ENCODE measurements at regions of chr11 and their contacts with region 1.

Region 1: DNA sequence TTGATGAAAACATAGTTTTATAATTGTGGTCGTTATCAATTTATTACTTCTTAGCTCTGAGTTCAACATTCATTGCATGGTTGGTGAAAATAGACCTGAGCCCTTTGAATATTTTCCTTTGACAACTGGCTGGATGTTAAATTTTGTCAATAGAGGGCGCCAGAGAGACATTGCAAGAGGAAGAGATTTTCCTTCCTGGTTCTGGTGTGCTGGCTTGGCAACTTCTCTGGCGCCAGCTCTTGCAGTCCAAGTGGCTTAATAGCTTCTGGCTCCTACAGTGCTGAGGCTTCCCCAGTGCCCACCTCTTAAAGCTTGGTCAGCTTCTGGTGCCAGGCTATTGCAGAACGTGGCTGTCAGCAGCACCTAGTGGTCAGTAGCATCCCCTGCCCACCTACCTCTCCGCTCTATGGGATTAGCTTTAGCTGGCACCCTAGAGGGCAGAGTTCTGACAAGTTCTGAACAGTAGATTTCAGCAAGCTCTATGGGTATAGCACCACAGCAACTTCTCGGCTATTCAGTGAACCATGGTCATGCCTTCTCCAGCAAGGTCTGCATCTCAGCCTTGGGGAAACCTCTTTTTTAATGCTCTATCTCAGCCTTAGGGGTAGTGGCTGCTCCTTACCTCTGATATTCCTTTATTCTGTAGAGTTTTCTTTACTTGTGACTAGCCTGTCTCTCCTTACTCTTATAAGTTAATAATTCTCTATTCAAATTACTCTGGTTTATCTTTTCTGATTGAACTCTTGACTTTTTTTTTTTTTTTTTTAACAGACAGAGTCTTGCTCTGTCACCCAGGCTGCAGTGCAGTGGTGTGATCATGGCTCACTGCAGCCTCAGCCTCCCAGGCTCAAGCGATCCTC is 59.4 kb downstream of the ACER3 start:
- DNase-seq: peak; percentile 36
- H3K4me3 ChIP-seq: no peak overlapping the region
- CTCF ChIP-seq: peak; percentile 67

Region 2: DNA sequence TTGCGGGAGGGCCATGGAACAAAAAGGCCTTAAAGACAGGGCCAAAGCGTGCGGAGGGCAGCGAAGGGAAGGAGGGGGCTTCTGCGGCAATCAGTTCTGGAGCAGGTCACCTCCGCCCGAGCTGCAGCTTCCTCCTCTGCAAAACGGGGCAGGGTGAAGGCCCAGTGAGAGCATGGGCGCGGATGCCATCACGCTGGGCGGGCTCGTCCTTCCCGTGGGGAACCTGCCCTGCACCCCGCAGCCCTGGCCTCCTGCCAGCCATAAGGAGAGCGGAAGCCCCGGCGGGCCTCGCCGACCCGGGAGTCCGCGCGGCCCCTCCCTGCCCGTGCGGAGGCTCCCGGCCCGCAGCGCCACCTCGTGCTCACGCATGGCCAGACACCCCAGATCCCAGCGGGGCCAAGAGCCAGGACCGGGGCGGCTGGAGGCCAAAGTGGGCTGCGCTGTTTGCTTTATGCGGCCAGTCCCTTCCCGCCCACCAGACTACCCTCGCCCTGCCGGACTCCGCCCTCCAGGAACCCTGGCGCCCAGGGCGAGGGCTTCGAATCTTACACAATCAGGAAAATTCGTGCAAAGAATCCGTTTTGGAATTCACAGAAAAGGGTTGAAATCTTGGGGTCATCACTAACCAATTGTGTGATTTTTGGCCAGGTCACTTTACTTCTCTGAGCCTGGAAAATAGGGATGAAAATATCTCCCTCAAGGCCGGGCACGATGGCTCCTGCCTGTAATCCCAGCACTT is 120.9 kb before region 1 on chr11:
- CTCF ChIA-PET with region 1: interaction called, 131 read pairs
- POLR2A ChIA-PET with region 1: no interaction called
- DNase-seq: no peak
- H3K4me3 ChIP-seq: peak overlapping the region; percentile 18
- CTCF ChIP-seq: peak; percentile 92

Region 3: GRCh38 chr11:76850815-76851214 is 69.3 kb before region 1 on chr11:
- CTCF ChIA-PET with region 1: interaction called, 21 read pairs
- POLR2A ChIA-PET with region 1: no interaction called
- DNase-seq: no peak
- H3K4me3 ChIP-seq: no peak overlapping the region
- CTCF ChIP-seq: no peak

Region 4: DNA sequence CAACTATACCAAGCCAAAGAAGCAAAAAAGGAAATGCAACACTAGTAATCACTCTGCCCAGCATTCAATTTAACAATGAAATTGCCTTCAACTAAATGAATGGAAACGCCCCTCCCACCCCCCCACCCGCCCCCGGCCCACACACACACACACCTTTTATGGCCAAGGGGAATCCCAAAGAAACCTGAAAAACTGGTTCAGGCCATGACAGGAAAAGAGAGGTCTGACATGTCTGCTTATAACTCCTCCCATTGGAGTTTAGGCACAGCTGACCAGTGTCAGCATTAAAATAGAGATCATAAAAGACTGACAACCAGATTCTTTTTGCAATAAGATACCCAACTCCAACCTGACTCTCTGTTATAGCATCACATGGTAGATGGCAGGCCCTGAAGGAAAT is 16.8 kb before region 1 on chr11:
- CTCF ChIA-PET with region 1: interaction called, 141 read pairs
- POLR2A ChIA-PET with region 1: no interaction called
- DNase-seq: no peak
- H3K4me3 ChIP-seq: no peak overlapping the region
- CTCF ChIP-seq: no peak

Region 5: GRCh38 chr11:77027270-77027669 is 107.2 kb after region 1 on chr11:
- CTCF ChIA-PET with region 1: interaction called, 15 read pairs
- POLR2A ChIA-PET with region 1: no interaction called
- DNase-seq: no peak
- H3K4me3 ChIP-seq: no peak overlapping the region
- CTCF ChIP-seq: no peak

Region 6: DNA sequence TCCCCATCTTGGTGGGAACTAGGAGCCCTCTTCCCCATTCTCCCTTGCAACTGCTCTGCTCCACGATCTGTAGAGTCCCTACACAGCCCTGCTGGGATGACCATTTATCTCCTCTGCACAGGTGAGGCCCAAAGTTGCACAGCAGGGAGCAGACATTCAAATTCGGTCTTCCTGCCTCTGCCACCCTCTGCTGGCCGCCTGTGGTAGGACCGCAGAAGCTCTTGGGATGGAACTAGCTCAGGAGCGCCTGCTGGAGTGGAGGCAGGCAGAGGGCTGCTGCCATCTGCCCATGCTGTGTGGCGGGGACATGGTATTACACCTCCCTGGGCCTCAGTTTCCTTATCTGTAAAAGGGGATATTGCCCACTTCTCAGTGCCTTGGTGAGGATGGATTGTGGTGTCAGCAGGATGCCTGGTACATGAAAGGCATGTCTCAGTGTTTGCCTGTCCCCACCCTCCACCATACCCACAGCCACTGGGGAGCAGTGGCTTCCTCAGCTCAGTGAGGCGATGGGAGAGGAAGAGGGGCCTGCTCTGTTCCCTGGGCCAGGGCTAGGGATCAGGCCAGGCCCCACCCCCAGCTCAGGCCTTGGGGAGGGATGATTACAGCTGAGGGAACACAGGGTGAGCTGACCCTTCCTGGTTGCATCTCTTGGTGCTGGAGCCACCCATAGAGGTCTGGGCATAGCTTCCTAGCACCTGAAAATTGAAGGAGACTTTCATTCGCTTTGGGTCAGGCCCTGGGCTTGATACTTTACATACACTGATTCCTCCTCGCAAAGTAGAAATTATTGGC is 171.2 kb after region 1 on chr11:
- CTCF ChIA-PET with region 1: interaction called, 17 read pairs
- POLR2A ChIA-PET with region 1: no interaction called
- DNase-seq: no peak
- H3K4me3 ChIP-seq: no peak overlapping the region
- CTCF ChIP-seq: peak; percentile 97

Region 7: GRCh38 chr11:77322506-77322905 is 402.4 kb after region 1 on chr11:
- CTCF ChIA-PET with region 1: no interaction called
- POLR2A ChIA-PET with region 1: no interaction called
- DNase-seq: no peak
- H3K4me3 ChIP-seq: no peak overlapping the region
- CTCF ChIP-seq: no peak

Measured in AG04449 (cell line).